CD4-positive, alpha-beta memory T cell (primary cell): ENCODE measurements at regions of chr3 and their contacts with region 1.

Region 1: DNA sequence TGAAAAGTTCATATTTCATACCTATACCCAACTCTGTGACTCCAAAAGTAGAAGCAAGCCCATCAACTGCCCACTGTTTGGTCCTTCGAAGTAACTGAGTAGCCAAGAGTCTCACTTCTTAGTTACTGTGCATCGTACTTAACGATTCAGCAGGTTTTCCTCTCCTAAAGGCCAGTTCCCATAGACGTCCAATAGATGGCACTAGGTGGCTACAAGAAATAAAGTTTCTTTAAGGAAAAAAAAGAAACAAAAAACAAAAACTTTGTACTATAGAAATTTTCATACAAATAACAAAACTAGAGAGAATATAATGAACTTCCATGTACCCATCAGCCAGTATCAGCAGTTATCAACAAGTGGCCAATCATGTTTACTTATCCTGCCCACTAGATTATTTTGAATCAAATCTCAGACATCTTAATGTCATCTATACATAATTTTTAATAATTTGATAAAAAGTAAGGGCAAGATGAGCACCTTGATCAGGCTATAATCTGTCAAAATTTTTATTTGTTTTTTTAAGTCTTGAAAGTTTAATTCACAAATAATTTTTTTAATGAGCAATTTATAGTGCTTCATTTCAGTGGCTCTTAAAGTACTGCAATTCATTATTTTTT is 63.8 kb upstream of the ACP3 start:
- DNase-seq: peak in 4 of 5 donors; percentile 2 to 24 (median 4)
- H3K4me3 ChIP-seq: no peak overlapping the region
- H3K4me3 Mint-ChIP-seq: no peak overlapping the region
- H3K27ac ChIP-seq: no peak overlapping the region
- H3K27ac Mint-ChIP-seq: no peak overlapping the region
- H3K4me1 ChIP-seq: no peaks in the 10 kb centered on the region
- H3K4me1 Mint-ChIP-seq: no peaks in the 10 kb centered on the region
- H3K27me3 ChIP-seq: no peaks in the 10 kb centered on the region
- H3K27me3 Mint-ChIP-seq: peaks cover 4% of the 10 kb centered on the region in 2 donors

Region 2: GRCh38 chr3:132343018-132343612 is 89.7 kb after region 1 on chr3:
- CTCF ChIA-PET with region 1: no interaction called
- POLR2A ChIA-PET with region 1: no interaction called
- intact Hi-C with region 1: loop called (anchors 1 kb)
- DNase-seq: peak; percentile 10 to 45 (median 16)
- H3K4me3 ChIP-seq: no peak overlapping the region
- H3K4me3 Mint-ChIP-seq: peak overlapping the region in 2 of 8 donors; percentile 10 to 23
- H3K27ac ChIP-seq: no peak overlapping the region
- H3K27ac Mint-ChIP-seq: no peak overlapping the region
- H3K4me1 ChIP-seq: no peaks in the 10 kb centered on the region
- H3K4me1 Mint-ChIP-seq: peaks cover 0 to 3% (median 3%) of the 10 kb centered on the region in 4 donors
- H3K27me3 ChIP-seq: no peaks in the 10 kb centered on the region
- H3K27me3 Mint-ChIP-seq: peaks cover 4 to 7% of the 10 kb centered on the region in 2 donors